ENCODE measurements at regions of chr12 and their contacts with region 1.

Region 1: DNA sequence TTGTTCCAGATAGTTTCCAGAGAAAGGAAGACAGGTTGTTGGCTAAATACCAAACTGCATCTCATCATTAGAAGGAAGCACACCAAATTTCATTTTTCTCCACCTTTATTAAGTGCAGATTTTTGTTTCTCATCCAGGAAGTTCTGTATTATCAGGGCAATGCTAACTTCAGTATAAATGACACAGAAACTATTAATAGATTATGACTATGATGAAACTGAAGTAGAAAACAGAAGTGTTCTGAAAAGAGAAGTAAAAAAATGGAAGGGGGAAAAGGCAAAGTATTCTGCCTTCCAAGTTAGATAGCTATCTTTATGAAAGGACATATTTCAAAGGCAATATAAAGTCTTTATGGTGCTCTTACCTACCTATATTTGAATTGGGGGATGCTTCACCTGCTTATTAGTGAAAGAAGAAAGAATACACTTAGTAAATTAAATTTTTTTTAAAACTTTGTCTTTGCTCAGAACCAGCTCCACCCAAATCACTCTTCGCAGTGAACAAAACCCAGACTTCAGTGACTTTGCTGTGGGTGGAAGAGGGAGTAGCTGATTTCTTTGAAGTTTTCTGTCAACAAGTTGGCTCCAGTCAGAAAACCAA is 223.9 kb downstream of the PTPRO start:
- DNase-seq: peak; percentile 38
- H3K4me3 Mint-ChIP-seq: no peak overlapping the region
- H3K27ac Mint-ChIP-seq: peak overlapping the region; percentile 79
- H3K4me1 Mint-ChIP-seq: peaks cover 64% of the 10 kb centered on the region
- H3K27me3 Mint-ChIP-seq: no peaks in the 10 kb centered on the region

Region 2: GRCh38 chr12:15013634-15014179 is 532.5 kb before region 1 on chr12:
- CTCF ChIA-PET with region 1: no interaction called
- intact Hi-C with region 1: no loop called
- DNase-seq: no peak
- H3K4me3 Mint-ChIP-seq: no peak overlapping the region
- H3K27ac Mint-ChIP-seq: no peak overlapping the region
- H3K4me1 Mint-ChIP-seq: no peaks in the 10 kb centered on the region
- H3K27me3 Mint-ChIP-seq: peaks cover 2% of the 10 kb centered on the region

Region 3: GRCh38 chr12:15044471-15044870 is 501.7 kb before region 1 on chr12:
- CTCF ChIA-PET with region 1: no interaction called
- intact Hi-C with region 1: no loop called
- DNase-seq: no peak
- H3K4me3 Mint-ChIP-seq: no peak overlapping the region
- H3K27ac Mint-ChIP-seq: no peak overlapping the region
- H3K4me1 Mint-ChIP-seq: peaks cover 3% of the 10 kb centered on the region
- H3K27me3 Mint-ChIP-seq: no peaks in the 10 kb centered on the region

Region 4: GRCh38 chr12:15193946-15194345 is 352.3 kb before region 1 on chr12:
- CTCF ChIA-PET with region 1: no interaction called
- intact Hi-C with region 1: no loop called
- DNase-seq: no peak
- H3K4me3 Mint-ChIP-seq: no peak overlapping the region
- H3K27ac Mint-ChIP-seq: no peak overlapping the region
- H3K4me1 Mint-ChIP-seq: no peaks in the 10 kb centered on the region
- H3K27me3 Mint-ChIP-seq: peaks cover 10% of the 10 kb centered on the region

Region 5: GRCh38 chr12:15532364-15532977 is 13.7 kb before region 1 on chr12:
- CTCF ChIA-PET with region 1: interaction called, 34 read pairs
- intact Hi-C with region 1: loop called (anchors 1 kb)
- DNase-seq: peak; percentile 72
- H3K4me3 Mint-ChIP-seq: no peak overlapping the region
- H3K27ac Mint-ChIP-seq: no peak overlapping the region
- H3K4me1 Mint-ChIP-seq: peaks cover 18% of the 10 kb centered on the region
- H3K27me3 Mint-ChIP-seq: no peaks in the 10 kb centered on the region

Region 6: DNA sequence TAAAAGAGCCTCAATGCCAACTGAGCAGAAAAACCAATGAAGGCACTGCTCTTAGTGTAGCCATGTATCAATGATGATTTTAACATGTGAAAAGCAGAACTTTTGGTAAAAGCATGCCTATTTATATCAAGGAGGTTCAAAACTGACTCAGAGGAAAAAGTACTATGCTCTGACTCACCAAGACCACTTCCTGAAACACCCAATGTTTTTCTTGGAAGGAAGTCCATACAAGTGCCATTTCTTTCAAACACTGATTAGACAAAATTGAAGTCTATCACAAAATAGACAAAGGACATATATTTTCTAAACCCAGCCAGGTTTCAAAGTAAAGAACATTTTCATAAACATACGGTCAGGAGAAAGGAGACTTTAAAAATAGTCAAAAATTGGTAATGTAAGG is 154.4 kb after region 1 on chr12:
- CTCF ChIA-PET with region 1: no interaction called
- intact Hi-C with region 1: loop called (anchors 5 kb)
- DNase-seq: peak; percentile 45
- H3K4me3 Mint-ChIP-seq: no peak overlapping the region
- H3K27ac Mint-ChIP-seq: peak overlapping the region; percentile 35
- H3K4me1 Mint-ChIP-seq: peaks cover 27% of the 10 kb centered on the region
- H3K27me3 Mint-ChIP-seq: peaks cover 3% of the 10 kb centered on the region

Measured in activated naive CD4-positive, alpha-beta T cell treated with anti-CD3 and anti-CD28 coated beads for 36 hours (primary cell).